SK-N-SH (cell line): ENCODE measurements at regions of chr4 and their contacts with region 1.

Region 1: DNA sequence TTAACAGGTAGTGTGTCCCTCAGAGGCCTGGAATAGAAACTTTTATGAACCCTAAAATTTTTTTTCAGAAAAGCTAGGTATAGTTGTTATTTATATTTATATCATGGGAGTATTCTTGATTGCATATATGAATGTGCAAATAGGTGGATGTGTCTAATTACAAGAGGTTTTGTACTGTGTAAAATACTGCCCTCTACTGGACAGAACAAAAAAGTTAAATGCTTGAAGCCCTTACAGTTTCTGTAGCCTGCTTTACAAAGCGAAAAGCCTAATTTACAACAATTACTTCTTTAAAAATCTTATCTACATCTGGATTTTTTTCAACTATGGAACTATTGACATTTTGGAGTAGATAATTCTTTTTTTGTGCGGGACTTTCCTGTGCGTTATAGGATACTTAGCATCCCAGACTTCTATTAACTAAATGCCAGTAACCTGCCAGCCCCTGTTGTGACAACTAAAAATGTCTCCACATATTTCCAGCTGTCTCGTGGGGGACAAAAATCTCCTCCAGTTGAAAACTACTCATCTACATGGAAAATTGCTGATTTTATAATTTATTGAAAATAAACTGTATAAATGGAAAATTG is 35.1 kb downstream of the ENPEP start:
- DNase-seq: peak; percentile 40
- H3K4me3 ChIP-seq: no peak overlapping the region; a peak in 1 of 4 replicates
- H3K27ac ChIP-seq: no peak overlapping the region
- H3K4me1 ChIP-seq: no peaks in the 10 kb centered on the region; a peak in 1 of 4 replicates
- H3K27me3 ChIP-seq: no peaks in the 10 kb centered on the region
- CTCF ChIP-seq: peak; percentile 84
- EP300 ChIP-seq: no peak
- RAD21 ChIP-seq: peak; percentile 78

Region 2: DNA sequence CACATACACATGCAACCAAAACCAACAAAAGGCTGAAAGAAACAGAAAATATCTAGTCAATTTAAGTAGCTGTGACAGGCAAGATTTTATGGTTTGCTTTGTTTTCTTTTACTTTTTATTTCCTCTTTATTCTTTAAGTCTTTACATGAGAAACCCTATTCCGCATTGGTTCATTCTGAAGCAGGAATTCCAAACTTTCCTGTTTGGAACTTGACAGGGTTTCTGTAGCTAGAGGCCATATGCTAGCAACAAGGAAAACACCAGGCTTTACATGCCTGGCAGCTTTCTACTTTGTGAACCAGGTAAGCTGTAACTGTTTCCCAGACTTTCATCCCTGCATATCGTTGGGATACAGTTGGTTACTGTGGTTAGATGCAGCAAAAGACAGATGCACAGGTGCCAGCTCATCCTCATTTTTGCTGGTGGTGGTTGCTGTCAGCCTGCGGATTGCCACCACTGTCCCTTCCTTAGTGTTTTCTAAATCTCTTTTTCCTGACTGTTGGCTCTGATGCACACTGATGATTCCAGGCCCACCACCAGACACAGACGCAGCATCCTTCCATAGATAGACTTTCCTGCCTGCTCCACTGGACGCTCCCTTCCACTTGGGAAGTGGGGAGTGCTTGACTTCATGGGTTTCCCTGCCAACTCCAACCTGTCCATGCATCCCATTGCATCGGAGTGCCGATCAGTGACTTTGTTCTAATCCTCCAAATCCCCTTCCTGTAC is 497.0 kb before region 1 on chr4:
- CTCF ChIA-PET with region 1: interaction called, 591 read pairs
- POLR2A ChIA-PET with region 1: no interaction called
- DNase-seq: no peak
- H3K4me3 ChIP-seq: no peak overlapping the region
- H3K27ac ChIP-seq: no peak overlapping the region
- H3K4me1 ChIP-seq: no peaks in the 10 kb centered on the region
- H3K27me3 ChIP-seq: no peaks in the 10 kb centered on the region
- CTCF ChIP-seq: no peak
- EP300 ChIP-seq: no peak
- RAD21 ChIP-seq: no peak

Region 3: DNA sequence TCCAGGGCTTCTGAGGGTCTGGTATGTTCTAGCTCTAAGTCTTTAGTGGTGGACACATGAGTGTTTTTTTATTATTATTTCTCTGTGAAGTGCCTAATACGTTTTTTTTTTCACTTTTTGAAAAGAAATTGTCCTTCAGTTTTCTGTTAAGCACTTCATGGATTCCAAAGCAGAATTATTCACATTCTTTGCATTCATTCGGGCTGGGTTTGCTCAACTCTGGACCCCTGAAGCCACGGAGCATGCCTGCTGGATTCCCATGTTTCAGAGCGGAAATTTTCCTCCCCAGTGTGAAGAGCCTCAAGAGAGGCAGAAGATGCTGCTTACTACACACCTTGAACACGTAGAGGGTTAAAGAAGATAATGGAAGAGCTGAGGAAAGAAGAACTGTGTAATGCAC is 490.9 kb before region 1 on chr4:
- CTCF ChIA-PET with region 1: interaction called, 11 read pairs
- POLR2A ChIA-PET with region 1: no interaction called
- DNase-seq: no peak
- H3K4me3 ChIP-seq: no peak overlapping the region
- H3K27ac ChIP-seq: no peak overlapping the region
- H3K4me1 ChIP-seq: no peaks in the 10 kb centered on the region
- H3K27me3 ChIP-seq: no peaks in the 10 kb centered on the region; the same call in 1 of the 2 replicates
- CTCF ChIP-seq: no peak
- EP300 ChIP-seq: no peak
- RAD21 ChIP-seq: no peak

Region 4: GRCh38 chr4:110310795-110311194 is 200.3 kb before region 1 on chr4:
- CTCF ChIA-PET with region 1: interaction called, 38 read pairs
- POLR2A ChIA-PET with region 1: no interaction called
- DNase-seq: no peak
- H3K4me3 ChIP-seq: no peak overlapping the region
- H3K27ac ChIP-seq: no peak overlapping the region
- H3K4me1 ChIP-seq: peaks cover 0 to 5% of the 10 kb centered on the region in 2 experiments; a peak in 3 of 4 replicates
- H3K27me3 ChIP-seq: no peaks in the 10 kb centered on the region
- CTCF ChIP-seq: no peak
- EP300 ChIP-seq: no peak
- RAD21 ChIP-seq: no peak